ENCODE measurements at regions of chr4 and their contacts with region 1.

Region 1: DNA sequence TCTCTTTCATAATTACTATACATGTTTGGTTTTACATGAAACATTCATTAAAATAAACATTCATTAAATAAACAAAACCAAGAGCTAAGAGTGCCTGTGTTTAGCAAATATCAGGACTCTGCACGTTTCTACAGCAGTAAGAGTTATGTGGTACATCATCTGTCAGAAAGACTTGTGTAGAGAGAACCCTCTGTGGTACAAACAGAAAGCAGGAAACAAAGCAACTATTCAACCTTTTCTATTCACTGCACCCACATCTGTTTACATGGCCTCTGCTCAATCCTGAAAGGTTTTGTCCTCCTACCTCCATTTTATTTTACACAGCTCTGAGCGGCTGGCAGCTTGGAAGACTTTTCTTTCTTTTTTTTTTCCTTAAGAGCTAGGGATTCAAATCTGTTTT is 90.7 kb upstream of the PCDH18 start:
- DNase-seq: no peak
- ATAC-seq: peak; percentile 87
- H3K4me3 ChIP-seq: no peak overlapping the region
- H3K27ac ChIP-seq: peak overlapping the region; percentile 80; the same call in 1 of the 2 replicates
- H3K4me1 ChIP-seq: peaks cover 6% of the 10 kb centered on the region
- H3K27me3 ChIP-seq: no peaks in the 10 kb centered on the region
- CTCF ChIP-seq: no peak
- POLR2A ChIP-seq: no peak
- RAD21 ChIP-seq: no peak

Region 2: DNA sequence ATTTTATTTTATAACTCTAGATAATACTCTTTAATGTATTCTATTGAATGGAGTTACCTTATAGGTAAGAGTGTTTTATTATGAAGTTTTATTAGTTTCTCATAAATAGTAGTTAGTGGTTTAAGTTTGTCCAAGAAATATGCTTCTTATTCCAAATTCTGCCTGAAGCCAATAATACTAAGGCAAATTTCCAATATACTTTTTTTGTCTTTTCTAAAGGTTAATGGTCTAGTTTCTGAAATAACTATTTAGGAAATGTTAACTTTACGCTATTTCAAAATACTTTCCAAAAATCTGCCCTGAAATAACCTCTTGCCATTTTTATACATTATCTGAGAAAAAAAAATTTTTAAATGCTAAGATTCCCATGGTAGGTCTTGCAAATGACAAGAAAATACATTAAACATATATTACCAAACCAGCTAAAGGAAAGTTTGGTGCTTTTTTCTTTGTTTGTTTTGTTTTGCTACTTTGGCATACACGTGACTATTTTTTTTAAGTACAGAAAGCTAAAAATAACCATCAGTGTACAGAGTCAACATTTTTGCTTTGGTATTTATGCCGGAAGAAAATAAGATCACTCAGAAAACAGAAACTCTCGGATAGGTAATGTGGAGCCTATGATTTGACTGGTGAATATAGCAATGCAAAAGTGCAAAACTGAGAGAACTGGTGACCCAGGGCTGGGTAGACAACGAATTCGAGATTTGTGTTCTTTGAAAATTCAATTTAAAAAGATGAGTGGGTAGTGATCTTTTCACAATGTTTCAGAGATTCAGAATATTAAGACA is 120.5 kb before region 1 on chr4:
- CTCF ChIA-PET with region 1: no interaction called
- POLR2A ChIA-PET with region 1: no interaction called
- dilution Hi-C with region 1: no loop called
- in situ Hi-C with region 1: no loop called
- intact Hi-C with region 1: no loop called
- DNase-seq: no peak
- ATAC-seq: no peak
- H3K4me3 ChIP-seq: no peak overlapping the region
- H3K27ac ChIP-seq: no peak overlapping the region
- H3K4me1 ChIP-seq: no peaks in the 10 kb centered on the region
- H3K27me3 ChIP-seq: no peaks in the 10 kb centered on the region
- CTCF ChIP-seq: no peak
- POLR2A ChIP-seq: no peak
- RAD21 ChIP-seq: no peak

Region 3: DNA sequence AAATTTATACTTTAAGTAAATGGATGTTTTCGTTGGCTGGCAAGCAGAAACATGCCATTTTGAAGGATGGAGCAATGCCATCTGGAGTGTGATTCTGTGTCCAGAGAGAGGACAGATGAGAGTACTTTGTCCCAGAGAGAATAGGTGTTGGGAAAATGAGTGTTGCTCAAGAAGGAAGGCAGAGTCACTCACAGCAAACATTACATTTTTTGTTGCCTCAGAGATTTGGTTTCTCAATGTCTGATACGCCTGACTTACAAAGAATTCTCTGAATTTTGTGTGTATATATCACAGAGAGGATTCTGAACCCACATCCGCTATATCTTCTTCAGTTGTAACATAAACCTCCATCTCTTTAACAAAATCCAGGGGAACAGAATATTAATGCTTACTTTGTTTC is 12.1 kb after region 1 on chr4:
- CTCF ChIA-PET with region 1: no interaction called
- POLR2A ChIA-PET with region 1: no interaction called
- dilution Hi-C with region 1: no loop called
- in situ Hi-C with region 1: no loop called
- intact Hi-C with region 1: loop called (anchors 1 kb)
- DNase-seq: peak; percentile 78
- ATAC-seq: peak; percentile 79
- H3K4me3 ChIP-seq: no peak overlapping the region
- H3K27ac ChIP-seq: peak overlapping the region; percentile 81; the same call in 1 of the 2 replicates
- H3K4me1 ChIP-seq: peaks cover 5% of the 10 kb centered on the region; the same call in 1 of the 2 replicates
- H3K27me3 ChIP-seq: no peaks in the 10 kb centered on the region
- CTCF ChIP-seq: no peak
- POLR2A ChIP-seq: no peak
- RAD21 ChIP-seq: no peak